Activated CD4-positive, alpha-beta T cell treated with anti-CD3 and anti-CD28 coated beads, Interleukin-2, amount 10 ng/mL, durations not matched to agents 24 days and 14 days (primary cell): ENCODE measurements at regions of chr3 and their contacts with region 1.

Region 1: GRCh38 chr3:29555590-29555989 is 274.7 kb downstream of the RBMS3 start:
- DNase-seq: no peak
- H3K4me3 Mint-ChIP-seq: no peak overlapping the region
- H3K27ac Mint-ChIP-seq: no peak overlapping the region
- H3K4me1 Mint-ChIP-seq: peaks cover 8% of the 10 kb centered on the region
- H3K27me3 Mint-ChIP-seq: no peaks in the 10 kb centered on the region

Region 2: DNA sequence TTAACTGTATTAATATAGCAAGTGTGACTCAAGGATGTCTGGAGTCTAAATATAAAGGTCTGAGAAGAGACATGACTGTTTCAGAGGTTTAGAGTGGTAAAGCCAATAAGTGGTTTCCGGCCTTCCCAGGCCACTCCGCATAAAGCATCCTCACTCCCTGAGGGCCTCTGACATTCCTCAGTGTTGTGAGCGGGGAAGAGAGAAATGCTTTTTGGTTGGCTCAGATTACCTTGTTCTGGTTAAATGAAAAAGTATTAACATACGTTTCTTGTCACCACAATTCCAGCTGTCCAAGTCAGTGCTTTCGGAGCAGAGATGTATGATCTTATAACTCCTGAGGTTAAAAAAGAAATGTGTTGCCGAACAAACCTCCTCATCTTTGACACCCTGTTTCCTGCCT is 170.9 kb before region 1 on chr3:
- intact Hi-C with region 1: loop called (anchors 10 kb)
- DNase-seq: no peak
- H3K4me3 Mint-ChIP-seq: no peak overlapping the region
- H3K27ac Mint-ChIP-seq: no peak overlapping the region
- H3K4me1 Mint-ChIP-seq: peaks cover 6% of the 10 kb centered on the region
- H3K27me3 Mint-ChIP-seq: no peaks in the 10 kb centered on the region